ENCODE measurements at regions of chr7 and their contacts with region 1.

Region 1: DNA sequence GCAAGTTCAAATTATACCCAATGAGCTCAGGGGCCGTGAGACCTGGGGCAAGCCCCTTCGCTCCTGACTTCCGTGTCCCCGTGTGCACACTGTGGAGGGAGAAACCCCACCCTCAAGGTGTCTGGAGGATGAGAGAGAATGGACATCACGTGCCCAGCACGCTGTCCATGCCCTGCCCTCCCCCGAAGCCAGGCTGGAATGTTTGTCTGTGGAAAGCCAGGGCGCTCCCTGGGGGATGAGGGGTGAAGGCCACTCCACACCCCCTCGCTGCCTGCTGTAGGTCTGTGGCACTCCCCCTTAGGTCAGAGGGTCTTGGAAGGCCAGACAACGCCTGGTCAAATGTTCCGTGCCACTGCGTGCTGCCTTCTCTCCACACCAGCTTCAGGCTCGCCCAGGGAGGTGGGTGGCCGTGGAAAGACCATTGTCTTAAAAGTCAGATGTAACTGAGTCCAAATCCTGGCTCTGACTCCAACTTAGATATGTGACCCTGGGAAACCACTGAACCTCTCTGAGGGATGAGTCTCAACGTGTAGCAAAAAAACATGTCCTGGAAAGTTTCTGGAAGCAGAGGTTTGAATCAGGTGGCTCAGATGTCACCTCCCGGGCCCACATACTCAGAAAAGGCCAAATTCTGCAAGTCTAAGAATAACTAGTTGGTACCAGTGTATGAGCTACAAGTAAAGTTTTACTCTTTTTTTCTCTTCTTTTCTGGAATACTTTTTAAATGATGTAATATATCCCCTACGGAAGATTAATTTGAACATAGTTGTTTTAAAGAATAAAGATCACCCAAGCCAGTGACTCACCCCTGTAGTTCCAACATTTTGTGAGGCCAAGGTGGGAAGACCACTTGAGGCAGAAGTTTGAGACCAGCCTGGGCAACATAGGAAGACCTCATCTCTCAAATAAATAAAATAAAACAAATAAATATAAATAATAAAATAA is 24.9 kb downstream of the RCC1L start:
- DNase-seq: no peak
- ATAC-seq: no peak
- H3K4me3 ChIP-seq: no peak overlapping the region
- H3K27ac ChIP-seq: no peak overlapping the region
- H3K4me1 ChIP-seq: peaks cover 15% of the 10 kb centered on the region
- CTCF ChIP-seq: no peak
- EP300 ChIP-seq: no peak
- POLR2A ChIP-seq: no peak
- RAD21 ChIP-seq: no peak

Region 2: DNA sequence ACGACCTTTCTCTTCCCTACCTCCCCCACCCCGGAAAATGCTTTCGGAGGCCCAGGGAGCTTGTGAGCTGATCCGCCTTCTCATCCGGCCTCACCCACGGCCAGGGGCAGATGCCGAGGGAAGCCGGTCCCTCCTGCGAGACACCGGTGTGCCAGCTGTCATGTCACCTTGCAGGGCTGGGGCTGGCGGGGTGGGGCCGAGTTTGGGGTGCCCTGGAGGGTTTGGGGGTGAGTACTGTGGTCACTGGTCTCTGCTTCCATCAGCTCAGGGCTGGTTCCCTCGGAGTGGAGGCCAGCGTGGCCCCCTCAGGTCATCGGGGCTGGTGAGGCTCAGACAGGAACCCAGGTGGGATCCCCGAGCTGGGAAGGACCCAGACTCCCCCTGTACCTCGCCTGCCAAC is 23.8 kb before region 1 on chr7:
- CTCF ChIA-PET with region 1: interaction called, 72 read pairs
- POLR2A ChIA-PET with region 1: no interaction called
- DNase-seq: no peak
- ATAC-seq: peak in 1 of 2 experiments; percentile 7; a peak in 1 of 6 replicates
- H3K4me3 ChIP-seq: no peak overlapping the region
- H3K27ac ChIP-seq: no peak overlapping the region
- H3K4me1 ChIP-seq: no peaks in the 10 kb centered on the region
- CTCF ChIP-seq: no peak
- EP300 ChIP-seq: no peak
- POLR2A ChIP-seq: no peak
- RAD21 ChIP-seq: no peak

Region 3: GRCh38 chr7:75033050-75033449 is 15.7 kb before region 1 on chr7:
- CTCF ChIA-PET with region 1: interaction called, 72 read pairs
- POLR2A ChIA-PET with region 1: no interaction called
- DNase-seq: peak; percentile 43 to 44
- ATAC-seq: peak in 1 of 2 experiments; percentile 64; a peak in 3 of 6 replicates
- H3K4me3 ChIP-seq: no peak overlapping the region
- H3K27ac ChIP-seq: no peak overlapping the region
- H3K4me1 ChIP-seq: no peaks in the 10 kb centered on the region
- CTCF ChIP-seq: no peak
- EP300 ChIP-seq: no peak
- POLR2A ChIP-seq: no peak
- RAD21 ChIP-seq: no peak

Region 4: DNA sequence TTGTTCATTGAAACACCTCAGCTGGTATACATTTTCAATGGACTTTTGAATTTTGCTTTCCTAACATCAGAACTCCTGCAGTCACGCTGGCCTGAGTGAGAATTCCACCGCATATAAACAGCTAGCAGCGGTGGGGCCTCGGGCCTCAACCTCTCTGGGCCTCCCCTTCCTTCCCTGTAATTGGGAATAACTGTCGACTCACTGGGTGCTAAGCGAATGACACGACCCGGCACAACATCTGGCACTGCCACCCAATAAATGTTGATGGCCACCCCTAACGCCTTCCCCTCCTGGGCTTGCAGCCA is 24.2 kb after region 1 on chr7:
- CTCF ChIA-PET with region 1: interaction called, 10 read pairs
- POLR2A ChIA-PET with region 1: no interaction called
- DNase-seq: peak in 1 of 2 experiments; percentile 40
- ATAC-seq: peak; percentile 23 to 42
- H3K4me3 ChIP-seq: peak overlapping the region; percentile 73
- H3K27ac ChIP-seq: peak overlapping the region; percentile 93 to 97
- H3K4me1 ChIP-seq: peaks cover 8% of the 10 kb centered on the region
- CTCF ChIP-seq: no peak
- EP300 ChIP-seq: no peak
- POLR2A ChIP-seq: no peak
- RAD21 ChIP-seq: no peak

Region 5: DNA sequence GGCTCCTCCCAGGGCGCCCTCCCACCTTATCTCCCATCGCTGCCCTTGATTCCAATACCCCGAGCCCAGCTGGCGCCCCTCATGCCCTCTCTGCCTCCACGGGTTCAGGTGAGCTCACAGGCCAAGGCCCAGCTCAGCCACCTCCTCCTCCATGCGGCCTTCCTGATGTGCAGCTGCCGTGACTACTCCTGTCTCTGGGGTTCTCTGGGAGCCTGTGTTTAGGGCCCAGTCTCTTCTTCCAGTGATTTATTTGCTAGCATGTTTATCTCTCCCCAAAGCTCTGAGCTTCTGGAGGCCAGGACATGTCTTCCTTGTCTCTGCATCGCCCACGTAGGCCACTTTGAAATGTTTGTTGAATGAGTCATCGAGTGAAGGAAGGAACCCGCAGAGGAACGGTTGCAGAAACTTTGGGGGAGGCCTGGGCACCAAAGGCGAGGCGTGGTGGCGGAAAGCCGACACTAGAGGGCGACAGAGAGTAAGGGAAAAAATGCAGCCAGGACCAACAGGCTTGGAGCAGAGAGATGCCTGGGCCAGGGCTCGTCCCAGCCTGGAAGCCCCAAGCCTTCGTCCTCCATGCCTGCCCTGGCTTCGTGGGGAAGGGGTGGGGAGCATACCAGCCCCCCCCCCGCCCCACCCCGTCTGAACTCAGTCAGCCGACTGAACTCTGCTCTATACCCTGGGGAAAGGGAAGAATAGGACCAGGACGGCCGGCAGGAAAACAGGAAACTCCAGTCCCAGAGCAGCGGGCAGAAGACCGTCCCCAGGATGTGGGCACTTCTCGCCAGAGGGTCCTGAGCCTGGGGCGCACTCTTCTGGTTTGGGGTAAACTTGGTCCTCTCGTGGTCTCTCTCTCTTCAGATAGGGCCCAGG is 1242.9 kb after region 1 on chr7:
- CTCF ChIA-PET with region 1: no interaction called
- POLR2A ChIA-PET with region 1: no interaction called
- DNase-seq: peak; percentile 91 to 96
- ATAC-seq: peak; percentile 78 to 84
- H3K4me3 ChIP-seq: peak overlapping the region; percentile 37
- H3K27ac ChIP-seq: peak overlapping the region; percentile 92 to 97
- H3K4me1 ChIP-seq: peaks cover 49% of the 10 kb centered on the region
- CTCF ChIP-seq: peak; percentile 96
- EP300 ChIP-seq: no peak
- POLR2A ChIP-seq: peak; percentile 48
- RAD21 ChIP-seq: peak; percentile 96 to 98

Measured in A549 (cell line).